ENCODE measurements at regions of chr3 and their contacts with region 1.

Region 1: DNA sequence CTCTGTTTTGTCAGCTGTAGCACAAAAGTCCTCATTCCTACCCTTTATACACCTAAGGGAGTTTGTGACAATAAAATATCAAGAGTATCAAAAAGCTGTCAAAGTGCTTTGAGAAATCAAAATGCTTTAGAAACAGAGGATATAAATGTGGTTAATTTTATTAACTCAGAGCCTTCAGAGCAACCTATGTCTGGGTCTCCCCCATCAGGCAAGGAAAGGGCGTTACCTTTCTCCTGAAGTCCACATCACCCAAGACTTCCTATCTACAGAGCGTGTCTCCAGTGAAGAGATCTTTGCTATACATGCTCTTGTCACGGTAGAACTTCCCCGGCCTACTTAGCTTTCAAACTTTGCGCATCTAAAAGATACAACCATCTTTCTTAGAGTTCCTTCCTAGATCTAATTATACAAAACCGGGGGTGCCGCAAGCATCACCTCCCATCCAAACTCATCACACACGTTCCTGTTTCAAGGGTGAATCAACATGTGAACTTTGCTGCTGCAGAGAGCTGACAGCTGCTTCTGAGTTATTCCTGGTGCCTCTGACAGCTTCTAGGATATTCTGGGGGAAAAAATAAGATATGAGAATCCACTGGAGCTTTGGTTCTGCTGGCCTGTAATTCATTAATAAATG is 93.0 kb downstream of the RARB start:
- DNase-seq: no peak
- H3K4me3 ChIP-seq: no peak overlapping the region
- H3K27ac ChIP-seq: no peak overlapping the region
- H3K4me1 ChIP-seq: no peaks in the 10 kb centered on the region
- H3K27me3 ChIP-seq: no peaks in the 10 kb centered on the region
- CTCF ChIP-seq: no peak
- EP300 ChIP-seq: no peak
- POLR2A ChIP-seq: no peak

Region 2: GRCh38 chr3:24475925-24476324 is 1045.1 kb before region 1 on chr3:
- in situ Hi-C with region 1: no loop called
- intact Hi-C with region 1: loop called (anchors 5 kb)
- DNase-seq: no peak
- H3K4me3 ChIP-seq: no peak overlapping the region
- H3K27ac ChIP-seq: no peak overlapping the region
- H3K4me1 ChIP-seq: peaks cover 0 to 11% (median 3%) of the 10 kb centered on the region in 4 donors
- H3K27me3 ChIP-seq: no peaks in the 10 kb centered on the region
- CTCF ChIP-seq: no peak
- EP300 ChIP-seq: no peak
- POLR2A ChIP-seq: no peak

Region 3: DNA sequence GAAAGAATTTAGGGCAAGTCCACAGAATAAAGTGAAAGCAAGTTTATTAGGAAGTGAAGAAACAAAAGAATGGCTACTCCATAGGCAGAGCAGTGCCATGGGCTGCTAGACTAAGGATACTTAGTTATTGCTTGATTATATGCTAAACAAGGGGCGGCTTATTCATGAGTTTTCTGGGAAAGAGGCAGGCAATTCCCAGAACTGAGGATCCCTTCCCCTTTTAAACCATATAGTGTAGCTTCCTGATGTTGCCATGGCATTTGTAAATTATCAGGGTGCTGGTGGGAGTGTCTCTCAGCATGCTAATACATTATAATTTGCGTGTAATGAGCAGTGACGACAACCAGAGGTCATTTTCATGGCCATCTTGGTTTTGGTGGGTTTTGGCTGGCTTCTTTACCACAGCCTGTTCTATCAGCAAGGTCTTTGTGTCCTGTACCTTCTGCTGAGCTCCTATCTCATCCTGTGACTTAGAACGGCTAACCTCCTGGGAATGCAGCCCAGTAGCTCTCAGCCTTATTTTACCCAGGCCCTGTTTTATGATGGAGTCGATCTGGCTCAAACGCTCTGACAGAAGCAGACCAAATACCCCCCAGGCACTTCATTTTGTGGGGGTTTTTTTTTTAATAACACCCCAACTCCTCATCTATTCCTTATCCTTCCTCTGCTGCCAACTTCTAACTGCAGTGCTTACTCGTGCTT is 195.9 kb before region 1 on chr3:
- in situ Hi-C with region 1: no loop called
- intact Hi-C with region 1: no loop called
- DNase-seq: no peak
- H3K4me3 ChIP-seq: no peak overlapping the region
- H3K27ac ChIP-seq: no peak overlapping the region
- H3K4me1 ChIP-seq: no peaks in the 10 kb centered on the region
- H3K27me3 ChIP-seq: no peaks in the 10 kb centered on the region
- CTCF ChIP-seq: no peak
- EP300 ChIP-seq: no peak
- POLR2A ChIP-seq: no peak

Region 4: GRCh38 chr3:25396686-25397085 is 124.4 kb before region 1 on chr3:
- in situ Hi-C with region 1: no loop called
- intact Hi-C with region 1: no loop called
- DNase-seq: no peak
- H3K4me3 ChIP-seq: no peak overlapping the region
- H3K27ac ChIP-seq: no peak overlapping the region
- H3K4me1 ChIP-seq: no peaks in the 10 kb centered on the region
- H3K27me3 ChIP-seq: no peaks in the 10 kb centered on the region
- CTCF ChIP-seq: no peak
- EP300 ChIP-seq: no peak
- POLR2A ChIP-seq: no peak

Region 5: GRCh38 chr3:25532431-25533162 is 11.6 kb after region 1 on chr3:
- in situ Hi-C with region 1: no loop called
- intact Hi-C with region 1: no loop called
- DNase-seq: no peak
- H3K4me3 ChIP-seq: no peak overlapping the region
- H3K27ac ChIP-seq: no peak overlapping the region
- H3K4me1 ChIP-seq: no peaks in the 10 kb centered on the region
- H3K27me3 ChIP-seq: no peaks in the 10 kb centered on the region
- CTCF ChIP-seq: peak in 2 of 5 experiments; percentile 23 to 35
- EP300 ChIP-seq: no peak
- POLR2A ChIP-seq: no peak